AG04449 (cell line): ENCODE measurements at regions of chr10 and their contacts with region 1.

Region 1: DNA sequence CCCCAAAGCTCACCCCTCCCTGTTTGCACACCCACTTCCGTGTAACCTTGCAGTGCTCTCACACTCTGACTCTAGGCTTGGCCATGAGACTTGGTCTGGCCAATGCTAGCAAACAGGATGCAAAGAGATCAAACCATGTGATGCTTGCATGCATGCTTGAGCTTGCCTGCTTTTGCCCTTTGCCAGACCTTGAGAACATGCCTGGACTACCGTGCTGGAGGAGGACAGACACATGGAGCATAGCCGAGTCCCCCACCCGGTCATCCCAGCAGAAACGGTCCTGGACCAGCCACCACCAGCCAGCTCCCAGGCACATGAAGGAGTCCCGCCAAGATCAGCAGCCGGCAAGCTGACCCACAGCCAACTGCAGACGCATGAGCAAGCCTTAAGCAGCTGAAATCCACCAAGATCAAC is 23.4 kb downstream of the PYROXD2 start:
- DNase-seq: no peak
- H3K4me3 ChIP-seq: no peak overlapping the region
- CTCF ChIP-seq: no peak

Region 2: GRCh38 chr10:98170249-98171117 is 221.1 kb before region 1 on chr10:
- CTCF ChIA-PET with region 1: interaction called, 62 read pairs
- POLR2A ChIA-PET with region 1: interaction called, 5 read pairs
- DNase-seq: no peak
- H3K4me3 ChIP-seq: no peak overlapping the region
- CTCF ChIP-seq: peak; percentile 70

Region 3: GRCh38 chr10:98208925-98209324 is 182.7 kb before region 1 on chr10:
- CTCF ChIA-PET with region 1: no interaction called
- POLR2A ChIA-PET with region 1: no interaction called
- DNase-seq: no peak
- H3K4me3 ChIP-seq: no peak overlapping the region
- CTCF ChIP-seq: no peak

Region 4: GRCh38 chr10:98253499-98253898 is 138.1 kb before region 1 on chr10:
- CTCF ChIA-PET with region 1: interaction called, 19 read pairs
- POLR2A ChIA-PET with region 1: no interaction called
- DNase-seq: no peak
- H3K4me3 ChIP-seq: no peak overlapping the region
- CTCF ChIP-seq: no peak

Region 5: GRCh38 chr10:98269072-98269912 is 122.3 kb before region 1 on chr10:
- CTCF ChIA-PET with region 1: interaction called, 23 read pairs
- POLR2A ChIA-PET with region 1: interaction called, 5 read pairs
- DNase-seq: peak; percentile 41
- H3K4me3 ChIP-seq: peak overlapping the region; percentile 51; the same call in 1 of the 2 replicates
- CTCF ChIP-seq: no peak

Region 6: DNA sequence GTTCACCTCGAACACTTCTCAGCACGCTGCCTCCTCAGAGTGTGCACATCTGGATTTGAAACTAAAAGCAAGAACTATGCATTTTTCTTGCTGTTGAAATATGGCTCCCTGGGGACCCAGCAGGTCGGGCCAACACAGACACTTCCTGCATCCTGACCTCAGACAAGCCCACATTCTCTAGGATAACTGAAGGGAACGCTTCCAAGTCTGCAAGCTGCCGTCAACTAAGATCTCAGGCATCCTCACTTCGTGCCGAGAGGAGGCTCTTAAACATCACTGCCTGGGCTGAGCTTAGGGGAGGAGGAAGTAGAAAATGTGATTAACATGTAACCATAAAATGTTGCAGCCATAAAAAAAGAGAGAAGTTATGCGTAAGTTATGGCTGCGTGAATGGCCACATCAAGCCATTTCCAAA is 42.1 kb before region 1 on chr10:
- CTCF ChIA-PET with region 1: interaction called, 6 read pairs
- POLR2A ChIA-PET with region 1: interaction called, 10 read pairs
- DNase-seq: peak; percentile 100
- H3K4me3 ChIP-seq: no peak overlapping the region; the same call in 1 of the 2 replicates
- CTCF ChIP-seq: no peak

Region 7: GRCh38 chr10:98414932-98415730 is 23.5 kb after region 1 on chr10 and contains the start of gene PYROXD2:
- CTCF ChIA-PET with region 1: interaction called, 12 read pairs
- POLR2A ChIA-PET with region 1: interaction called, 3 read pairs
- DNase-seq: peak; percentile 64
- H3K4me3 ChIP-seq: peak within 1 kb of the TSS; percentile 86
- CTCF ChIP-seq: no peak